GM10248 (cell line): ENCODE measurements at regions of chr16 and their contacts with region 1.

Region 1: GRCh38 chr16:31142109-31143010 is 6.8 kb upstream of the PRSS8 start:
- DNase-seq: peak; percentile 100
- CTCF ChIP-seq: peak; percentile 97

Region 2: GRCh38 chr16:30984669-30985400 is 157.5 kb before region 1 on chr16 and contains the start of gene HSD3B7:
- CTCF ChIA-PET with region 1: interaction called, 21 read pairs
- POLR2A ChIA-PET with region 1: no interaction called
- DNase-seq: peak; percentile 92
- CTCF ChIP-seq: peak; percentile 89

Region 3: GRCh38 chr16:31117391-31118197 is 24.8 kb before region 1 on chr16 and contains the start of gene KAT8:
- CTCF ChIA-PET with region 1: interaction called, 24 read pairs
- POLR2A ChIA-PET with region 1: interaction called, 10 read pairs
- DNase-seq: peak; percentile 99
- CTCF ChIP-seq: no peak

Region 4: GRCh38 chr16:31157136-31157535 is 14.8 kb after region 1 on chr16:
- CTCF ChIA-PET with region 1: interaction called, 60 read pairs
- POLR2A ChIA-PET with region 1: no interaction called
- DNase-seq: peak; percentile 20
- CTCF ChIP-seq: no peak

Region 5: GRCh38 chr16:31179747-31180459 is 37.5 kb after region 1 on chr16 and contains the start of gene FUS:
- CTCF ChIA-PET with region 1: interaction called, 24 read pairs
- POLR2A ChIA-PET with region 1: interaction called, 29 read pairs
- DNase-seq: peak; percentile 96
- CTCF ChIP-seq: no peak